CD8-positive, alpha-beta T cell (primary cell): ENCODE measurements at regions of chr1 and their contacts with region 1.

Region 1: DNA sequence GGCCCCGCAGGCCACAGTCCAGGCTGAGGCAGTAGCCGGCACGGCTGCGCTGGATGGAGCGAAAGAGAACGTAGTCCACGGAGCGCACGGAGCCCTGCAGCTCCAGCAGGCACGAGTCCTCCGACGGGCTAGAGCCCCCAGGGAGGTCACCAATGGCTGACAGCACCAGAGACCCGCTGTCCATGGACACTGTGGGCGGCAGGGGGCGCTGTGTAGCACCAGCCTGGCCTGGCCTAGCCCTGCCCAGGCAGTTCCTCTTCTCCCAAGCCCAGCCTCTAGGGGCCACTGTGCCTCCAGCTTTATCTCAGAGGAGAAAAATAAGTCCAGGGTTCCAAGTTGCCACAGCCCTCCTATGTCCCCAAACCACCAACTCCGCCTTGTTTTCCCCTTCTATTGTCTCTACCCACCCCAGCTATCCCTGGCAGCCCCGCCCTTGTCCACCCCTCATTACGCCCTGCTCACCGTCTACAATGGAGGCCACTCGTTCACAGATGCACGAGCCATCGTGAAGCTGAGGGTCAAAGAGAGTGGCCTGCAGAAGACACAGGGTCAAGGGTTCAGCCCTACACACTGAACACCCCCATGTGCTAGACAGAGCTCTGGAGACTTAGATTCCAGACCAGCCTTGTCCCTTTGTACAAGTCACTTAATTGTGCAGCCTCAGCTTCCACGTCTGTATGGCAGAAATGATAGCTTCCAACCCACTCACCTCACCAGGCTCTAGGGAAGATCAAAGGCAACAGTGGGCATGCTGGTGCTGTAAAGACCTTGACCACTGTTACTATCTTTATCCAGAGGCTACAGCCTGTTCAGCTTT is 4.4 kb downstream of the ENTREP3 start:
- DNase-seq: peak; percentile 92 to 99 (median 95)
- ATAC-seq: peak; percentile 96
- H3K4me3 ChIP-seq: peak overlapping the region; percentile 56 to 71
- H3K4me3 Mint-ChIP-seq: peak overlapping the region; percentile 77
- H3K27ac ChIP-seq: peak overlapping the region; percentile 35 to 56
- H3K27ac Mint-ChIP-seq: no peak overlapping the region
- H3K4me1 ChIP-seq: peaks cover 27% of the 10 kb centered on the region
- H3K4me1 Mint-ChIP-seq: peaks cover 27% of the 10 kb centered on the region
- H3K27me3 ChIP-seq: no peaks in the 10 kb centered on the region
- H3K27me3 Mint-ChIP-seq: no peaks in the 10 kb centered on the region
- CTCF ChIP-seq: peak; percentile 98

Region 2: DNA sequence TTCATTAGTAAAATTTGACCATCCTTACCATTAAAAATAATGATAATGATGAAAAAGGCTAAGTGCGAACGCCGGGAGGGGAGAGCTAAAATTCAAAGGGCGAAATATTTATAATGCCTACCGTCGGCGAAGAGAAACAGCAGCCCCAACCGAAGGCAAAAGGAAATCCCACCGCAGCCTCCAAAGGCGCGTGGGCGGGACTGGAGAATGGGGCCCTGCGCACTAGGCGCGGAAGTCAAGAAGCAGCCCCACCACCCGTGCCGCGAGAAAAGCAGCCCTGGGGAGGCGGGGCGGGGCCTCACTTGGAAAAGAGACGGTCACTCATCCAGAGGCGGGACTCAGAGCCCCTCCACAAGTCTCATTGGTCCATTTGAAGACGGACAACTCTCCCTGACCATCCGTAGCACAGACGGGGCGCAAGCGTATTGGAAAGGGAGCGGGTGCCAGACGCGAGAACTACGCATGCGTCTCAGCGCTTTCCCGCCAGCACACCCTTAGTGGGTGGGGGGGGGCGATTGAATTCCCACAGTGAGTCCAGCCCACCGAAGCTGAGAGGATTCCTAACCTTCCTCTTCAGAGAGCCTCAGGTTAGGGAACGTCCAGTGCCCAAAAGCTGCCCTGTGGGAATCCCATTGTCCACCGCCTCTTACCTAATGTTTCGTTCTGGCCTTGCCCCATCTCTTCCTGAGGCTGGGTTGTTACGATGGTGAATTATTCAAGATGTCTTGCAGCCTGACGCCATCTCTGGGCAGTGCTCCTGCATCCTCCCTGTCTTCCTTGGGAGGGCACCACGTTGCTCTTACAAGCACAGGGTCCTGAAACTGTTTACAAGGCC is 23.4 kb before region 1 on chr1:
- CTCF ChIA-PET with region 1: interaction called, 20 read pairs
- POLR2A ChIA-PET with region 1: no interaction called
- intact Hi-C with region 1: no loop called
- DNase-seq: peak; percentile 95 to 100 (median 98)
- ATAC-seq: peak; percentile 95
- H3K4me3 ChIP-seq: peak overlapping the region; percentile 71 to 74
- H3K4me3 Mint-ChIP-seq: peak overlapping the region; percentile 88
- H3K27ac ChIP-seq: peak overlapping the region; percentile 70 to 86
- H3K27ac Mint-ChIP-seq: peak overlapping the region; percentile 85
- H3K4me1 ChIP-seq: peaks cover 18% of the 10 kb centered on the region
- H3K4me1 Mint-ChIP-seq: peaks cover 24% of the 10 kb centered on the region
- H3K27me3 ChIP-seq: no peaks in the 10 kb centered on the region
- H3K27me3 Mint-ChIP-seq: no peaks in the 10 kb centered on the region
- CTCF ChIP-seq: no peak

Region 3: GRCh38 chr1:155277070-155277895 is 26.4 kb after region 1 on chr1 and contains the start of gene HCN3:
- CTCF ChIA-PET with region 1: interaction called, 121 read pairs
- POLR2A ChIA-PET with region 1: interaction called, 3 read pairs
- intact Hi-C with region 1: loop called in 1 of 2 experiments (anchors 2 kb)
- DNase-seq: peak; percentile 65 to 96 (median 92)
- ATAC-seq: peak; percentile 47
- H3K4me3 ChIP-seq: peak within 1 kb of the TSS; percentile 57 to 70
- H3K4me3 Mint-ChIP-seq: peak within 1 kb of the TSS; percentile 79
- H3K27ac ChIP-seq: peak within 1 kb of the TSS; percentile 20 to 31
- H3K27ac Mint-ChIP-seq: peak within 1 kb of the TSS; percentile 32
- H3K4me1 ChIP-seq: peaks cover 29% of the 10 kb centered on the region
- H3K4me1 Mint-ChIP-seq: peaks cover 35% of the 10 kb centered on the region
- H3K27me3 ChIP-seq: no peaks in the 10 kb centered on the region
- H3K27me3 Mint-ChIP-seq: no peaks in the 10 kb centered on the region
- CTCF ChIP-seq: peak; percentile 64
- total RNA-seq, gene HCN3: 1.3 TPM

Region 4: DNA sequence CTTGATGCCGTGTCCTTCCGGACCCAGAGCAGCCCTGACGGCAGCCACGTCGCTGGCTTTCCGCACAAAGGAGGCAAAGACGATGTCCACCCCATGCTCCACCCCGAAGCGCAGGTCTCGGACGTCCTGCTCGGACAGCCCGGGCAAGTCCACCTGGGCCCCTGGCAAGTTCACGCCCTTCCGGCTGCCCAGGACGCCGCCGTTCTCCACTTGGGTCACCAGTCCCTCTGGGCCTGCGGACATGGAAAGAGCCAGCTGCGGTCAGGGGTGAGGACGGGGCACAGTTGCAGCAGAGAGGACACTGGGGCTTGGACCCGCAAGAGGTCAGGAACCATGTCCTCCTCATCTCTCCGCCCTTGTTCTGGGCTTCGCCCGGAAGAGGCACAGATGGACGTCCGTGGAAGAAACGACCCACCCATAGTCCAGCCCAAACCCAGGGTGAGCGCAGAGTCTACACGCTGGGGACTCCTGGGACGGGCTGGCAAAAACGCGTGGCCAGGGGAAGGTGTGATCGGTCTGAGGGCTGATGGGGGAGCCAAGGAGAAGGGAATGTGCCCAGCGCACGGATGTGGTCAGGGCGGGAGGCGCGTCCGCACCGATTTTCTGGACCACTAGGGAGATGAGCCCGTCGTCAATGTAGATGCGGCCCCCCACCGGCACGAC is 43.8 kb after region 1 on chr1:
- CTCF ChIA-PET with region 1: no interaction called
- POLR2A ChIA-PET with region 1: no interaction called
- intact Hi-C with region 1: no loop called
- DNase-seq: no peak
- ATAC-seq: no peak
- H3K4me3 ChIP-seq: no peak overlapping the region
- H3K4me3 Mint-ChIP-seq: no peak overlapping the region
- H3K27ac ChIP-seq: no peak overlapping the region
- H3K27ac Mint-ChIP-seq: no peak overlapping the region
- H3K4me1 ChIP-seq: peaks cover 9% of the 10 kb centered on the region
- H3K4me1 Mint-ChIP-seq: peaks cover 3% of the 10 kb centered on the region
- H3K27me3 ChIP-seq: peaks cover 5 to 7% of the 10 kb centered on the region in 2 experiments
- H3K27me3 Mint-ChIP-seq: peaks cover 32% of the 10 kb centered on the region
- CTCF ChIP-seq: no peak

Region 5: DNA sequence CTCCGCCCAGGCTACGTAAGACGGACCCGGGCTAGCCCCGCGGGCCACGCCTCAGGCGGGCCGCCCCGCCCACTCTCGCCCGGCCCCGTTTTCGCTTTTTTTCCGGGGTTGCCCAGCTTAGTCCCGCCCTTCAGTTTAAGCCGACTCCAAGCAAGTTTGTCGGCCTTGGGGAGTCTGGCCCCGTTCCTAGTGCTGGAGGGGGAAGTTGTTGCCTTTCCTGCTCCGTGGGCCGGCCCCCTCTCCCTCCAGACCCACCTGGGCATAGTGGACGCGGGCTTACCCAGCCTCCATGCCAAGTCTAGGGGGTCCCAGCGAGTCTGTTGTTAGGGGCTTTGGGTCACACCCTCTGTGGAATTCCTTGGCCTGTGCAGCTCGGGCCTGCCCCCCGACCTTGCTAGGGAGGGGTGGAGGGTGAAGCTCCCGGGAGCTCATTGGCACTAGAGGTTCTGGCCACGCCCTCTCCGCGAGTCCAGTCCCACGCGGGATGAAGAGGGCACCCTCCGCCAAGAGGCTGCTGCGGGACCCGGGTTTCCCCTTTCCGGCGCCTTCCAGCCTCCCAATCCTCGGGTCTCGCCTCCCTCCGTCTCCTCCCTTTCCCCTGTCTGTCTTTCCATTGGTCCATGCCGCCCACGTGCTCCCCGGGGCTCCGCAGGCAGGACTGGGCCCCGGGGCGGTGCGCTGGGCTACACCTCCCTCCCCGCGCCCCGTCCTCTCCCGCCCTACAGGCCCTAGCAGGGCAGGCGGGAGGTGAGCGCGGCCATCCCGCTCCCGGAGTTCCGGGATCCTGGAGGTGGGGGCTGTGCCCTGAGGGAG is 73.2 kb after region 1 on chr1:
- CTCF ChIA-PET with region 1: interaction called, 152 read pairs
- POLR2A ChIA-PET with region 1: interaction called, 22 read pairs
- intact Hi-C with region 1: loop called (anchors 1 kb)
- DNase-seq: peak; percentile 66 to 94 (median 85)
- ATAC-seq: peak; percentile 81
- H3K4me3 ChIP-seq: peak overlapping the region; percentile 89 to 100
- H3K4me3 Mint-ChIP-seq: peak overlapping the region; percentile 90
- H3K27ac ChIP-seq: peak overlapping the region; percentile 69 to 90
- H3K27ac Mint-ChIP-seq: peak overlapping the region; percentile 55
- H3K4me1 ChIP-seq: peaks cover 34% of the 10 kb centered on the region
- H3K4me1 Mint-ChIP-seq: peaks cover 33% of the 10 kb centered on the region
- H3K27me3 ChIP-seq: no peaks in the 10 kb centered on the region
- H3K27me3 Mint-ChIP-seq: no peaks in the 10 kb centered on the region
- CTCF ChIP-seq: no peak

Region 6: DNA sequence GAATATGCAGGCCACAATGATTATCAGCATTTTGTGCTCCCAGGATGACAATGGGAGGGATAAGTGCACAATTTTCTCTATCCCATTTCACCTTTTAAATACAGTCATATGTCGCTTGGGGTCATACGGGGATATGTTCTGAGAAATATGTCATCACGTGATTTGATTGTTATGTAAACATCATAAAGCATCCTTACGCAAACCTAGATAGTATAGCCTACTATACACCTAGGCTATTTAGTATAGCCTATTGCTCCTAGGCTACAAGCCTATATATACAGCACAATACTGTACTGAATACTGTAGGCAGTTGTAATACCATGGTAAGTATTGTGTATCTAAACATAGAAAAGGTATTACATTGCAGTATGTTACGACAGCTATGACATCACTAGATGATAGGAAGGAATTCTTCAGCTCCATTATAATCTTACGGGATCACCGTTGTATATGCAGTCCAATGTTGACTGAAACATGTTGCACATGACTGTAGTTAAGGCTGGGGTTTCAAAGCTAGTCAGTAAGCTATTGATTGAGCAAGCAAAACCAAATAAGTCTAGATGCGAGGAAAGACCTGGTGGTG is 88.8 kb after region 1 on chr1:
- CTCF ChIA-PET with region 1: interaction called, 15 read pairs
- POLR2A ChIA-PET with region 1: no interaction called
- intact Hi-C with region 1: no loop called
- DNase-seq: no peak
- ATAC-seq: no peak
- H3K4me3 ChIP-seq: no peak overlapping the region
- H3K4me3 Mint-ChIP-seq: no peak overlapping the region
- H3K27ac ChIP-seq: no peak overlapping the region
- H3K27ac Mint-ChIP-seq: no peak overlapping the region
- H3K4me1 ChIP-seq: no peaks in the 10 kb centered on the region
- H3K4me1 Mint-ChIP-seq: no peaks in the 10 kb centered on the region
- H3K27me3 ChIP-seq: no peaks in the 10 kb centered on the region
- H3K27me3 Mint-ChIP-seq: no peaks in the 10 kb centered on the region
- CTCF ChIP-seq: no peak

Region 7: DNA sequence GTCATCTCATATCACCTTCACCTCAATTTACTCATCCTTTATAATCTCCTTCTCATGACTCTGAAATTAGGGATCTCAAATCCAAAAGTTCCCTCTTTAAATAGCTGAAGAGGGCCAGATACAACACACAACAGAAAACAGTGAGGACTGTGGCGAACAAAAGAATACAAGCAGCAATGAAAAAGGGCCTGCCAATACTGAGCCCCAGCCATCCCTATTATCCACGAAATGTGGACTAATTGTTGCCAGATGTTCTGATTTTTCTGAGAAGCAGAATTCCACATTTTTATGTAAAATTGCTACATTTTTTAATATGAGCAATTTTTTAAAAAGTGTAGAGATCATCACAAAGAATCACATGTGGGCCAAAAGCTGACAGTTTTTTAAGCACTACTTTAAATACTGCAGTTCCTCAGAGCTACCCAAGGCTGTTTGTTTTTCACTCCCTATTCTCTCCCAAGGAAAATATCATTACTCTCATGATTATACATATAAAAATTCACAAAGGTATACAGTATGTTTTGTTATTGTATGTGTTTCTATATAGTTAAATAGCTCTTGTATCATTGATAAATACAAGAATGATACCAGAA is 221.7 kb after region 1 on chr1:
- CTCF ChIA-PET with region 1: no interaction called
- POLR2A ChIA-PET with region 1: no interaction called
- intact Hi-C with region 1: no loop called
- DNase-seq: no peak
- ATAC-seq: no peak
- H3K4me3 ChIP-seq: no peak overlapping the region
- H3K4me3 Mint-ChIP-seq: no peak overlapping the region
- H3K27ac ChIP-seq: no peak overlapping the region
- H3K27ac Mint-ChIP-seq: no peak overlapping the region
- H3K4me1 ChIP-seq: peaks cover 4% of the 10 kb centered on the region
- H3K4me1 Mint-ChIP-seq: peaks cover 28% of the 10 kb centered on the region
- H3K27me3 ChIP-seq: no peaks in the 10 kb centered on the region
- H3K27me3 Mint-ChIP-seq: no peaks in the 10 kb centered on the region
- CTCF ChIP-seq: no peak

Region 8: DNA sequence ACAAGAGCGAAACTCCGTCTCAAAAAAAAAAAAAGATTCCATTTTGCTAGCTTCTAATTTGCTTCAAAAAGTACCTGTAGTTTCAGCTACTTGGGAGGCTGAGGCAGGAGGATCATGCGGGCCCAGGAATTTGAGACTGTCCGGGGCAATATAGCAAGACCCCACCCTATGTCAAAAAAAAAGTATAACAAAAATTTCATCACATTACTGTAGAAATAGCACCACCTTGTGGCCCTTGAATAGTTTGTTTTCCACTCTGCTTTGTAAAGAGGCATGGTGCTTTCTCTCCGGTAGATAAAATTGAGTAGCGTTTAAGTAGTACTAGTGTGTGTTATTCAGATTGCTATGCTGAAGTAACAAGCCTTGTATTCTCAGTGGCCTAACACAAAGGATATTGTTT is 340.9 kb after region 1 on chr1:
- CTCF ChIA-PET with region 1: interaction called, 56 read pairs
- POLR2A ChIA-PET with region 1: interaction called, 3 read pairs
- intact Hi-C with region 1: loop called (anchors 1 kb)
- DNase-seq: peak in 5 of 9 experiments; percentile 11 to 78 (median 31)
- ATAC-seq: peak; percentile 77
- H3K4me3 ChIP-seq: no peak overlapping the region
- H3K4me3 Mint-ChIP-seq: no peak overlapping the region
- H3K27ac ChIP-seq: no peak overlapping the region
- H3K27ac Mint-ChIP-seq: no peak overlapping the region
- H3K4me1 ChIP-seq: no peaks in the 10 kb centered on the region
- H3K4me1 Mint-ChIP-seq: peaks cover 3% of the 10 kb centered on the region
- H3K27me3 ChIP-seq: no peaks in the 10 kb centered on the region
- H3K27me3 Mint-ChIP-seq: no peaks in the 10 kb centered on the region
- CTCF ChIP-seq: peak; percentile 64